ENCODE measurements at regions of chr2 and their contacts with region 1.

Region 1: GRCh38 chr2:15939854-15940660 is at the start of gene MYCN:
- DNase-seq: peak; percentile 42
- H3K4me3 Mint-ChIP-seq: no peak within 1 kb of the TSS
- H3K27ac Mint-ChIP-seq: no peak within 1 kb of the TSS
- H3K4me1 Mint-ChIP-seq: no peaks in the 10 kb centered on the region
- H3K27me3 Mint-ChIP-seq: peaks cover 55% of the 10 kb centered on the region
- CTCF ChIP-seq: peak; percentile 85
- total RNA-seq, gene MYCN: not detected in 2 replicates

Region 2: GRCh38 chr2:15950088-15950952 is 10.3 kb after region 1 on chr2:
- CTCF ChIA-PET with region 1: interaction called, 16 read pairs
- POLR2A ChIA-PET with region 1: no interaction called
- intact Hi-C with region 1: no loop called
- DNase-seq: no peak
- H3K4me3 Mint-ChIP-seq: no peak overlapping the region
- H3K27ac Mint-ChIP-seq: no peak overlapping the region
- H3K4me1 Mint-ChIP-seq: no peaks in the 10 kb centered on the region
- H3K27me3 Mint-ChIP-seq: peaks cover 26% of the 10 kb centered on the region
- CTCF ChIP-seq: no peak

Region 3: DNA sequence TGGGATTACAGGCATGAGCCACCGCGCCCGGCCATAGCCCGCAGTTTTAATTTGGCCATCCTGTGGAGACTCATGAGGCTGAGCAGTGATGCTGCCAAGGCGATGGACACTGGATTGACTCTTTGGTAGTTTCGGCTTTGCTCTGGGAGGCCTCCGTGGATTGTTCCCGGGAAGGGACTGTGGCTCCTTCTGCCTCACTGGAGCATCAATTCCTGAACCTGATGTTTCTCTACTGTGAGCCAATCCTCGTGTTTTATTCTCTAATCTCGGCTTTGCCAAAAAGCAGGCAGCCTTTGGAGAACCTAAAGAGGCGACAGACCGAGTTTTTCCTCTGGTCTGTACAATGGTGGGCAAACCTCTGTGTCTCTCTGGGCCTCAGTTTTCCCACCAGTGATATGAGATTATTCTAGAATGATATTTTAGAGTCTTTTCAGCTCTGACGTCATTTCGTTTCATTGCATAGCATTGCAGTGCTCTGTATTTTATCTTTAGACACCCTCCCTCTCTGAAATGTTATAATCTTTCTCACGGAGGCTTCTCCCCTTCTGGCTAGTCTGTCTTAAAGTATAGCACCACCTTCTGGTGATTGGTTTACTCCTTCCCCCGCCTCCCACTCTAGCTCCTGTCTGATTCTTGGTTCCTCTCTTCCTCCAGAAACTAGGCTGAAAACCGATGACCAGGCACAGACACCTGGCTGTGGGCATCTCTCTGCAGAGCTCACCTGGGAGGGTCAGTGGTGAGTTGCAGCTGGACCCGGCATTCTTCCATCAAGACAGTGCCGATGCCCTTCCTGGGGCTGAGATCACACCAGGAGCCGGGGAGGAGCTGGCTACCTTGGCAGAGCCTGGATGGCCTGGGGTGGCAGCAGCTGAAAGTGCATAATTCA is 341.6 kb after region 1 on chr2:
- CTCF ChIA-PET with region 1: interaction called, 41 read pairs
- POLR2A ChIA-PET with region 1: no interaction called
- intact Hi-C with region 1: loop called (anchors 1 kb)
- DNase-seq: peak; percentile 39
- H3K4me3 Mint-ChIP-seq: no peak overlapping the region
- H3K27ac Mint-ChIP-seq: no peak overlapping the region
- H3K4me1 Mint-ChIP-seq: no peaks in the 10 kb centered on the region
- H3K27me3 Mint-ChIP-seq: no peaks in the 10 kb centered on the region
- CTCF ChIP-seq: peak; percentile 24

Region 4: DNA sequence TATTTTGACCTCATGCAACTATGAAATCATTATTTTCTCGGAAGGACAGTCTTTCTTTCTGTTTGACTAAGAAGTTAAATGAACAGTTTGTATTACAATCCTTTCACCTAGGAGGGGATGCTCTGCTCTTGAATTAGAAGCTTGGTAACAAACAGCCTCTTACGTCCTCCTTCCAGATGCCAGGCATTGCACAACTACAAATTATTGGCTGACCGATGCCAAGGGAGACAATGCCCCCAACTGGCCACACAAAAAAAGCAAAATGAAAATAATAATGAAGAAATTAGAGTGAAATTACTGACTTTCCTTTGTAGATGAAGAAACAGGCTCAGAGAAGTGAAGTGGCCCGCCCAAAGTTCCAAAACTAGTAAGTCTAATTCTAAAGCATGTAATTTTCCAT is 547.6 kb after region 1 on chr2:
- CTCF ChIA-PET with region 1: interaction called, 57 read pairs
- POLR2A ChIA-PET with region 1: interaction called, 4 read pairs
- intact Hi-C with region 1: loop called (anchors 1 kb)
- DNase-seq: peak; percentile 60
- H3K4me3 Mint-ChIP-seq: no peak overlapping the region
- H3K27ac Mint-ChIP-seq: no peak overlapping the region
- H3K4me1 Mint-ChIP-seq: no peaks in the 10 kb centered on the region
- H3K27me3 Mint-ChIP-seq: peaks cover 22% of the 10 kb centered on the region
- CTCF ChIP-seq: peak; percentile 42

Region 5: GRCh38 chr2:16507655-16508489 is 567.8 kb after region 1 on chr2:
- CTCF ChIA-PET with region 1: interaction called, 17 read pairs
- POLR2A ChIA-PET with region 1: no interaction called
- intact Hi-C with region 1: no loop called
- DNase-seq: no peak
- H3K4me3 Mint-ChIP-seq: no peak overlapping the region
- H3K27ac Mint-ChIP-seq: no peak overlapping the region
- H3K4me1 Mint-ChIP-seq: no peaks in the 10 kb centered on the region
- H3K27me3 Mint-ChIP-seq: no peaks in the 10 kb centered on the region
- CTCF ChIP-seq: peak; percentile 56